Mammary epithelial cell (primary cell): ENCODE measurements at regions of chr17 and their contacts with region 1.

Region 1: DNA sequence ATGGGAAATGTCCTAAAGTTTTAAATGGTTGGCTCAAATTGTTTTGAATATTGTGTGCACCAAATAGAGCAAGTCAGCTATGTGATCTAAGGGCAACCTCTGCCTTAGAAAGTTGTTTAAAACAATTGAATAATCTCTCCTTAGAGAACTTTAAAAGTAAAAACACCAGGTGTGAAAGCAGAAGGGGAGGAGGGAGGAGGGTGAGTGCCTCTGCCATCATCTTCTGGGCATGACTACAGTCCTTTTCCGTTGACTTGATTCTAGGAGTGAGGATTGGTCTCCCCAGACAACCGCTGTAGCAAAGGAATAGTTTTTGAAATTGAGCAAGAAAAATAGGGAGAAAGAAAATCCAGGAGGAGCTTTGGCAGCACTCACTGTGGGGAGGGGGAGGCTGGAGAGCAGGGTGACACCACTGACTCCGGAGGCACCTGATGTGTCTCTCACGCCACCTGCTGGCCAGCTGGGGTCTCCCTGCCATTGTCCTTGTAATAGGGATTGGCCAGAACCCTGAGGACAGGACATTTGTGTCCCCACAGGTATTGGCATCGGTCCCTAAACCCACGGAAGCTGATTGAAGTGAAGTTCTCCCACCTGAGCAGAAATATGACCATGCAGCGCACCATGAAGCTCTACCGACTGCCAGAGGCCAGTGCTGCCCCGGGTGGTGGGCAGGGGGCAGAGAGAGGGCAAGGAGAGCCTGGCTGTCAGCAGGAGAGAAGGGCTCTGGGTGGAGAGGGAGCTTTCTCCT is 33.3 kb downstream of the PLCD3 start:
- DNase-seq: peak; percentile 55
- H3K4me3 ChIP-seq: no peak overlapping the region
- H3K27ac ChIP-seq: peak overlapping the region; percentile 25
- H3K4me1 ChIP-seq: peaks cover 48% of the 10 kb centered on the region
- H3K27me3 ChIP-seq: no peaks in the 10 kb centered on the region
- CTCF ChIP-seq: peak; percentile 91 to 95

Region 2: DNA sequence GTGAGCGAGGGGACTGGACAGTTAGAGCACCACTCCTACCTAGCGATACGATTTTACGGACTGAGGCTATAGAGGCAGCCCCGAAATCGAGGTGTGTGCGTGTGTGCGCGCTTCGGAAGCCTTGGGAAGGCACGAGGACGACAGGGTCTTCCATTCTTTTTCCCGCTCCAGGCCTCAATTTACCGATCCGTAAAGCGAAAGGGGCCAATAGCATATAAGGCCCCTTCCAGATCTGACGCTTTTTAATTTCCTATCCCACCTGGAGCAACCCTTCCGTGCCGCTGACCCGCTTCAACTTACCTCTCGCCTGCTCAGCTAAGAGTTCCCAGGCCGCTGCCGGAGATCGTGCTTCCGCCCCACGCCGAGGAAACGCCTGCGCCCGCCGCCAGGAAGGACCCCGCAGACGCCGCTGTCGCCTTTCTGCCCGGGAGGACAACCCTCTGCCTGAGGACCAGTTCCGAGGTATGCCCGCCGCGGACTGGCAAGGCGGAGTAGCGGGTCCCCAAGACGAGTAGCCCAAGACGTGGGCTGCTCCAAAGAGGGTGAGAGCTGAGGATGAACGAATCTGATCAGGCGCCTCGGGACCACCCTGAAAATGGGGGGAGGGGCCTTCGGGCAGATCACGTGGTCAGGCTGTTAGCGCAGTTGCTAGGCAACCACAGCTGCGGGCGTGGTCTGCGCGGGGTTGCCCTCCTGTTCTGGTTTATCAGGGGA is 199.8 kb before region 1 on chr17 and contains the start of gene EFTUD2:
- CTCF ChIA-PET with region 1: no interaction called
- dilution Hi-C with region 1: no loop called
- in situ Hi-C with region 1: loop called in 1 of 2 experiments (anchors 10 kb)
- intact Hi-C with region 1: loop called (anchors 5 kb)
- DNase-seq: peak; percentile 86
- H3K4me3 ChIP-seq: peak within 1 kb of the TSS; percentile 69 to 89 (median 88)
- H3K27ac ChIP-seq: peak within 1 kb of the TSS; percentile 97
- H3K4me1 ChIP-seq: peaks cover 29% of the 10 kb centered on the region
- H3K27me3 ChIP-seq: no peaks in the 10 kb centered on the region
- CTCF ChIP-seq: no peak
- total RNA-seq, gene EFTUD2: 85.4 to 106 TPM

Region 3: DNA sequence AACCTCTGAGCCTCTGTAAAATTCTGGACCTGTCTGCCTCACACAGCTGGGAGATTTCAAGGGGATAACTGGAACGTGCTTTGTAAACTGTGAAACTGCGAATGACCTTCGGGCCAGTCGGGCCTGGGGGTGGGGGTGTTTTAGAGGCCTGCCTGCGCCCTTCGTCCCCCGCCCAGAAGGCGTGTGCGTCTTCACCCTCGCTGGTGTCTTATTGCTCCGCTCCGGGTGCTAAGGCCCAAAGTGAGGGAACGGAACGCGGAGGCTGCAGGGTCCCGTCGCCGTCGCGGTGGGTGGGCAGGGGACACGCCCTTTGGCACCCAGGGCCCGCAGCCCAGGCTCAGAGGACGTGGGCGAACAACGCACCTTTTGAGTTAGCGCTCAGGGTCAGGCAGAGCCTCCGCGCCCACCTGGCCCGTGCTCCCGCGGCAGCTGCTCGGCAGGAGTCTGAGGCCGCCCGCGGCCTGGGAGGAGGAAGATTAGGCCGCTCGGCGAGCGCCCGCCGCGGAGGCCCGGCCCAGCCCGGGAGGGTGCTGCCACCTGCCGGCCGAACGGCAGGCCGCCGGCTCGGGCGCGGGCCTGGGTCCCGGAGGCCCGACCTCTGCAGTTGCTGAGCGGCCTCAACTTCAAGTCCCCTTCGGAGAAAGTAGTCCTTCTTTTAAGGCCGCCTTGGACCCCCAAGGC is 77.3 kb before region 1 on chr17:
- CTCF ChIA-PET with region 1: no interaction called
- dilution Hi-C with region 1: no loop called
- in situ Hi-C with region 1: no loop called
- intact Hi-C with region 1: loop called (anchors 2 kb)
- DNase-seq: peak; percentile 39
- H3K4me3 ChIP-seq: peak overlapping the region in 1 of 3 experiments; percentile 24
- H3K27ac ChIP-seq: no peak overlapping the region
- H3K4me1 ChIP-seq: peaks cover 14% of the 10 kb centered on the region
- H3K27me3 ChIP-seq: no peaks in the 10 kb centered on the region
- CTCF ChIP-seq: peak; percentile 57 to 71

Region 4: DNA sequence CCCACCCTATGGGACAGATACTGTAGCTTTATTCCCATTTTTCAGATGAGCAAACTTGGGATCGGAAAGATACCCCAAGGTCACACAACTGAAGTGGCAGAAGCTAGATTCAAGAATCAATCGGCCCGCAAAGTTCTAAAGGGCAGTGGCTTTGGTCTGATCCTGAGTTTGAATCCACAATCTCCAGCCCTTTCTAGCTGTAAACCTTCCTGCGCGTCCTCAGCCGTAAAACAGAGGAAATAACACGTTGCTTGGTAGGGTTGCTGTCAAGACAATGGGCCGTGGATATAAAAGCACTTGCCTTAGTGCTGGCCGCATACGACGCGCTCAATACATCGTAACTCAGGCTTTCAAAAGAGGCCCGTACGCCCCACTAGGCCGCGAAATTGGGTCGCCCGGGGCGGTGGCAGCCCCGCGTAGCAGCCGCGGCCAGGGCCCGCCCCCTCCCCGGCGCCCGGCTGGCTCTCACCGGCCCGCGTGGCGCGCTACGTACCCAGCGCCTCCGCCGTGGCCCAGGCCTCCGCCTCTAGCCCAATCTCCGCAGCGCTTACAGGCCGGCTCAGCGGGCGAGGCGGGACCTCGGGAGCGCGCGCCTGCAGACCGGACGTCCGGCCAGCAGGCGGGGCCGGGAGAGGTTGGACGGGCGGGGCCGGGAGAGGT is 47.9 kb before region 1 on chr17 and contains the start of gene DCAKD:
- CTCF ChIA-PET with region 1: no interaction called
- dilution Hi-C with region 1: no loop called
- in situ Hi-C with region 1: no loop called
- intact Hi-C with region 1: loop called (anchors 2 kb)
- DNase-seq: peak; percentile 97
- H3K4me3 ChIP-seq: peak within 1 kb of the TSS; percentile 51 to 58 (median 55)
- H3K27ac ChIP-seq: peak within 1 kb of the TSS; percentile 94
- H3K4me1 ChIP-seq: peaks cover 23% of the 10 kb centered on the region
- H3K27me3 ChIP-seq: no peaks in the 10 kb centered on the region
- CTCF ChIP-seq: no peak
- total RNA-seq, gene DCAKD: 35.4 to 68.0 TPM

Region 5: DNA sequence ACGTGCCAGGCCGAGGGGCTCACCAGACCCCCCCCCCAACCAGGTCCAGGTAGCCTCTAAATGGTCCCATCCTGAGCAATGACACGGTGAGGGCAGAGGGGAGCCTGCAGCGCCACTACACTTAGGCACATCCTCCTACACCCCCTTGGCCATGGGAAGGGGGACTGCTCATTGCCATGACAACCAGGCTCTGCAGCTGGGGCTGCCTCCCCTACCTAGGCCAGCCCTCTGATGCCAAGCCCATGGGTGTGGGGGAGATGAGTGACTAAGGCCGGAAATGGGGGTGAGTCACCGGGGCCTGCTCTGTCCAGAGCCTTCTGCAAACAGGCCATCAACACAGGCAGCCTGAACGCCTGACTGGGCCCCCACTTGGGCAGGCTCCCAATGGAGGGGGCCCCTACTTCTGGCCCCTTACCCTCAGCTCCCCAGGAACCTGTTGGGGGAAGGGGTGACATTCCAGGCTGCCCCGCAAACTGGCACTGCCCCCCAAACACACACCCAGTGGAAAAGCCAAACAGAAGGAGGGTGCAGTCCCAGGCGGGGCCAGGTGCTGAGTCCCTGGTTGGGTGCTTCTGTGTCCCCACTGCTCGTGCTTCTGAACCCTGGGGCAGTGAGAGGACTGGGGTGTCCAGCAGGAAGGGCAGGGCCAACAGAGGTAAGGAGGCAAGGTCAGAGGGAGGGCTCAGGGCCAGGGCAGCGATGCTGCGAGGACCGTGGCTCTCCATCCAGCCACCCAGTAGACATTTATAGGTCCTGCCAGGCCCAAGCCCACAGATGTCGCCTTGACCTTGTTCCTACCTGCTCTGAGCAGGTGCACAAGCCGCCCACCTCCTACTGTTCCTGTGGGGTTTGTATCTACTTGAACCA is 25.1 kb after region 1 on chr17:
- CTCF ChIA-PET with region 1: no interaction called
- dilution Hi-C with region 1: no loop called
- in situ Hi-C with region 1: no loop called
- intact Hi-C with region 1: loop called (anchors 2 kb)
- DNase-seq: peak; percentile 79
- H3K4me3 ChIP-seq: no peak overlapping the region
- H3K27ac ChIP-seq: peak overlapping the region; percentile 64
- H3K4me1 ChIP-seq: peaks cover 51% of the 10 kb centered on the region
- H3K27me3 ChIP-seq: no peaks in the 10 kb centered on the region
- CTCF ChIP-seq: no peak

Region 6: GRCh38 chr17:45148183-45149036 is 49.4 kb after region 1 on chr17 and contains the start of gene HEXIM1:
- CTCF ChIA-PET with region 1: no interaction called
- dilution Hi-C with region 1: no loop called
- in situ Hi-C with region 1: no loop called
- intact Hi-C with region 1: no loop called
- DNase-seq: peak; percentile 100
- H3K4me3 ChIP-seq: peak within 1 kb of the TSS; percentile 72 to 98 (median 98)
- H3K27ac ChIP-seq: peak within 1 kb of the TSS; percentile 99
- H3K4me1 ChIP-seq: peaks cover 34% of the 10 kb centered on the region
- H3K27me3 ChIP-seq: no peaks in the 10 kb centered on the region
- CTCF ChIP-seq: no peak
- total RNA-seq, gene HEXIM1: 20.5 to 35.2 TPM